PC-3 (cell line): ENCODE measurements at regions of chr7 and their contacts with region 1.

Region 1: GRCh38 chr7:33050535-33051318 is 11.8 kb downstream of the NT5C3A start:
- DNase-seq: peak; percentile 66
- ATAC-seq: peak; percentile 67
- H3K4me3 ChIP-seq: no peak overlapping the region
- H3K27ac ChIP-seq: no peak overlapping the region
- H3K4me1 ChIP-seq: peaks cover 10% of the 10 kb centered on the region
- H3K27me3 ChIP-seq: no peaks in the 10 kb centered on the region
- CTCF ChIP-seq: peak; percentile 78

Region 2: GRCh38 chr7:32694182-32694581 is 356.5 kb before region 1 on chr7:
- CTCF ChIA-PET with region 1: no interaction called
- POLR2A ChIA-PET with region 1: no interaction called
- intact Hi-C with region 1: loop called (anchors 5 kb)
- DNase-seq: no peak
- ATAC-seq: no peak
- H3K4me3 ChIP-seq: no peak overlapping the region
- H3K27ac ChIP-seq: no peak overlapping the region
- H3K4me1 ChIP-seq: no peaks in the 10 kb centered on the region; the same call in 1 of the 2 replicates
- H3K27me3 ChIP-seq: no peaks in the 10 kb centered on the region
- CTCF ChIP-seq: no peak

Region 3: DNA sequence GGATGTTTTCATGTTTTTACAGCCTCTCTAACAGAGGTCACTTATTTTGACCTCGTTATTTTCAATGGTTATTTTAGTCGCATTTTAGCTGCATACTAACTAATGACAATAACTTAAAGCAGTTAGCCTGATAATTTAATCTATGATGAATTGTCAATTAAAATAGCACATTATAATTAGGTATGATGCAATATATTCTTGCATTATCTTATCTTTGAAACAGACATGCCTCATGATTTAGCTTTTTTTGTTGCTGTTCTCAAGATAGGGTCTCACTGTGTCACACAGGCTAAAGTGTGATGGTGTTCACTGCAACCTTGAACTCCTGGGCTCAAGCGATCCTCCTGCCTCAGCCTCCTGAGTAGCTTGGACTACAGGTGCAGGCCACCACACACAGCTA is 285.5 kb before region 1 on chr7:
- CTCF ChIA-PET with region 1: no interaction called
- POLR2A ChIA-PET with region 1: no interaction called
- intact Hi-C with region 1: loop called (anchors 1 kb)
- DNase-seq: no peak
- ATAC-seq: no peak
- H3K4me3 ChIP-seq: no peak overlapping the region
- H3K27ac ChIP-seq: no peak overlapping the region
- H3K4me1 ChIP-seq: no peaks in the 10 kb centered on the region
- H3K27me3 ChIP-seq: no peaks in the 10 kb centered on the region
- CTCF ChIP-seq: no peak

Region 4: GRCh38 chr7:32803406-32804141 is 247.2 kb before region 1 on chr7:
- CTCF ChIA-PET with region 1: no interaction called
- POLR2A ChIA-PET with region 1: no interaction called
- intact Hi-C with region 1: loop called (anchors 2 kb)
- DNase-seq: no peak
- ATAC-seq: no peak
- H3K4me3 ChIP-seq: no peak overlapping the region
- H3K27ac ChIP-seq: no peak overlapping the region
- H3K4me1 ChIP-seq: no peaks in the 10 kb centered on the region
- H3K27me3 ChIP-seq: no peaks in the 10 kb centered on the region
- CTCF ChIP-seq: no peak

Region 5: DNA sequence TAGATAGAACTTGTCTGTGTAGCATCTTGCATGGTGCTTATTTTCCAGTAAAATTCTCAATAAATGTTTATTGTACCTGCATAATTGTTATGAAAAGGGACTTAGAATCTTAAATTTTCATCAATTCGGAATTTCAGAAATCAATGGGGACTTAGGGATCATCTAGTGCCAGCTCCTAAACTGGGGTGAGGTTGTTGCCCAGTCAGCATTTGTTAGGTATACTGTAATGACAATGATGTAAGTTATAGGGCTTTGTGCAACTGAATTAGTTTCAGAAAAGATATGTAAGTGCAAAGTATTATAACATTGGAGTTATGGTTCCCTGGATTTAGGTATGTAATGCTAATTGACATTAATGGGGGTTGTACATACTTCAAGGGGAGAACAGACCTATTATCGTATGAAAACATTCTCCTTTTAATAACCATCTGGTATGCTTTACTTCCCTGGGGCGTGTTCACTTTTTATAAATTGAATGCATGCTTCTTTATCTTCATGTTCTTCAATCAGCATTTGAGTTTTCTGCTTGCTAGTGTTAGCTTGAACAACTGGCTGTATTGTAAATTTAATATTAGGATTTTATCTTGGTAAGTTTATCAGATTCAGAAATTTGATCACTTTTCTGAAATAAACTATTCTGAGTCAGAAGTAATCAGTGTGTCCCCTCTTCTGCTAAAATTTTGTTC is 348.9 kb after region 1 on chr7:
- CTCF ChIA-PET with region 1: no interaction called
- POLR2A ChIA-PET with region 1: no interaction called
- intact Hi-C with region 1: no loop called
- DNase-seq: no peak
- ATAC-seq: no peak
- H3K4me3 ChIP-seq: no peak overlapping the region
- H3K27ac ChIP-seq: no peak overlapping the region
- H3K4me1 ChIP-seq: no peaks in the 10 kb centered on the region
- H3K27me3 ChIP-seq: no peaks in the 10 kb centered on the region
- CTCF ChIP-seq: no peak